ENCODE measurements at regions of chr4 and their contacts with region 1.

Region 1: GRCh38 chr4:7802093-7802726 is 137.5 kb downstream of the AFAP1 start:
- DNase-seq: peak; percentile 80
- H3K4me3 Mint-ChIP-seq: no peak overlapping the region
- H3K27ac Mint-ChIP-seq: no peak overlapping the region
- H3K4me1 Mint-ChIP-seq: peaks cover 17% of the 10 kb centered on the region
- H3K27me3 Mint-ChIP-seq: no peaks in the 10 kb centered on the region
- CTCF ChIP-seq: peak; percentile 87

Region 2: DNA sequence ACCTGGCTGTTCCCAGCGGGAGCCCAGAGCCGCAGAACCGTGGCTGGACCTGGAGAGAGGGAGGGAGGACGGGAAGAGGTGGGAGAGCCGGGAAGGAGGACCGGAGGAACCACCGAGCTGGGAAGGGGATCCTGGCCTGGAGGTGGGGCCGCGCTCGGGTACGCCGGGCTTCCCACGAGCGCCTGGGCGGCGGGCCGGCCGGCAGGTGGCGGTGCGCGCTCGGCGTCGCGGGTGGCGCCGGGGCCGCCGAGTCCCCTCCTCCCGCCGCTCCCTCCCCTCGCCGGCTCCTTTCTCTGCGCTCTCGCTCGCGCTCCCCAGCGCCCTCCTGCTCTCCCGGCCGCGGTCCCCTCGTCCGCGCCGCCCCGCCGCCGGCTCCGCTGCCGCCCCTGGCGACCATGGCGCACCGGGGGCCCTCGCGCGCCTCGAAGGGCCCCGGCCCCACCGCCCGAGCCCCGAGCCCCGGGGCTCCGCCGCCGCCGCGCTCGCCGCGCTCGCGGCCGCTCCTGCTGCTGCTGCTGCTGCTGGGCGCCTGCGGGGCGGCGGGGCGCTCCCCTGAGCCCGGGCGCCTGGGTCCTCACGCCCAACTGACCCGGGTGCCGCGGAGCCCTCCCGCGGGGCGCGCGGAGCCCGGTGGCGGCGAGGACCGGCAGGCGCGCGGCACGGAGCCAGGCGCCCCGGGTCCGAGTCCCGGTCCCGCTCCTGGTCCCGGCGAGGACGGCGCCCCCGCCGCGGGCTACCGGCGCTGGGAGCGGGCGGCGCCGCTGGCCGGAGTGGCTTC is 609.8 kb before region 1 on chr4 and contains the start of gene SORCS2:
- CTCF ChIA-PET with region 1: interaction called, 8 read pairs
- POLR2A ChIA-PET with region 1: no interaction called
- intact Hi-C with region 1: loop called (anchors 2 kb)
- DNase-seq: peak; percentile 45
- H3K4me3 Mint-ChIP-seq: no peak within 1 kb of the TSS
- H3K27ac Mint-ChIP-seq: no peak within 1 kb of the TSS
- H3K4me1 Mint-ChIP-seq: peaks cover 13% of the 10 kb centered on the region
- H3K27me3 Mint-ChIP-seq: peaks cover 48% of the 10 kb centered on the region
- CTCF ChIP-seq: peak; percentile 72
- total RNA-seq, gene SORCS2: 0.05 TPM in 1 of 2 replicates, not detected in the other

Region 3: DNA sequence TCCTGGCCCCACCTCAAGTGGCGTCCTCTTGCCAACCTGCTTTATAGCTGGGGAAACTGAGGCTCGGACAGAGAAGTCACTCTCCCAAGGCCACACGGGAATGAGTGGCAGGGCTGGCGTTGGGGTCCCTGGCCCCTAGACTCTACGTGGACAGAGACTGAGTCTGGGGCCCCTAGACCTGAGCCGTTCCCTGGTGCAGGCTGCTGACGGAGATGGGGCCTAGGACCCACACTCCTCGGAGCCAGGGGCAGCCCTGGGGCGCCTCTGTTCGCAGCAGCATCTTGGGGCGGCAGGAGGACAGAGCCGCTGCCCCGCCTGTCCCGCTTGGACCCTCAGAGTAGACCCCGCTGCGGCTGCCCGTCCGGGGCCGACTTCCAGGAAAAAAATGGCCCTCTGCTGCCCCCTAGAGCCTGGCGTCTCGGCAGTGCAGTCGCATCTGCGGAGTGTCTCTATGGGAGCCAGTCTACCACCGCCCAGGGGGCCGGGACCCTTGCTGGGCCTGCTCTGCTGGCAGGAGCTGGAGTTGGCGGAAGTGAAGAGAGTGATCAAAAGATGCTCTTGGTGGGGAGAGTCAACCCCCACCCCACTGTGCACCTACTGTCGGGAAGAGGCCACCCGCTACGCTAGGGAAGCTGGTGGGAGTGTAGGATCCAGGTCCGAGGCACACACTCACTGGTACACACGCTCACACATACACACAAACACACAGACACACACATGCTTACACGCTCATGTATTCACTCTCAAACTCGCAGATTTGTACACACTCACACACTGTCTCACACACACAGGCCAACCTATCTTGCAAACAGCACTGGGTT is 82.6 kb before region 1 on chr4:
- CTCF ChIA-PET with region 1: interaction called, 3 read pairs
- POLR2A ChIA-PET with region 1: no interaction called
- intact Hi-C with region 1: loop called (anchors 2 kb)
- DNase-seq: peak; percentile 38
- H3K4me3 Mint-ChIP-seq: no peak overlapping the region
- H3K27ac Mint-ChIP-seq: no peak overlapping the region
- H3K4me1 Mint-ChIP-seq: no peaks in the 10 kb centered on the region
- H3K27me3 Mint-ChIP-seq: peaks cover 24% of the 10 kb centered on the region
- CTCF ChIP-seq: peak; percentile 75

Region 4: GRCh38 chr4:7929118-7929951 is 127.1 kb after region 1 on chr4:
- CTCF ChIA-PET with region 1: interaction called, 66 read pairs
- POLR2A ChIA-PET with region 1: interaction called, 10 read pairs
- intact Hi-C with region 1: loop called (anchors 1 kb)
- DNase-seq: peak; percentile 84
- H3K4me3 Mint-ChIP-seq: no peak overlapping the region
- H3K27ac Mint-ChIP-seq: peak overlapping the region; percentile 39
- H3K4me1 Mint-ChIP-seq: peaks cover 29% of the 10 kb centered on the region
- H3K27me3 Mint-ChIP-seq: no peaks in the 10 kb centered on the region
- CTCF ChIP-seq: peak; percentile 43

Region 5: DNA sequence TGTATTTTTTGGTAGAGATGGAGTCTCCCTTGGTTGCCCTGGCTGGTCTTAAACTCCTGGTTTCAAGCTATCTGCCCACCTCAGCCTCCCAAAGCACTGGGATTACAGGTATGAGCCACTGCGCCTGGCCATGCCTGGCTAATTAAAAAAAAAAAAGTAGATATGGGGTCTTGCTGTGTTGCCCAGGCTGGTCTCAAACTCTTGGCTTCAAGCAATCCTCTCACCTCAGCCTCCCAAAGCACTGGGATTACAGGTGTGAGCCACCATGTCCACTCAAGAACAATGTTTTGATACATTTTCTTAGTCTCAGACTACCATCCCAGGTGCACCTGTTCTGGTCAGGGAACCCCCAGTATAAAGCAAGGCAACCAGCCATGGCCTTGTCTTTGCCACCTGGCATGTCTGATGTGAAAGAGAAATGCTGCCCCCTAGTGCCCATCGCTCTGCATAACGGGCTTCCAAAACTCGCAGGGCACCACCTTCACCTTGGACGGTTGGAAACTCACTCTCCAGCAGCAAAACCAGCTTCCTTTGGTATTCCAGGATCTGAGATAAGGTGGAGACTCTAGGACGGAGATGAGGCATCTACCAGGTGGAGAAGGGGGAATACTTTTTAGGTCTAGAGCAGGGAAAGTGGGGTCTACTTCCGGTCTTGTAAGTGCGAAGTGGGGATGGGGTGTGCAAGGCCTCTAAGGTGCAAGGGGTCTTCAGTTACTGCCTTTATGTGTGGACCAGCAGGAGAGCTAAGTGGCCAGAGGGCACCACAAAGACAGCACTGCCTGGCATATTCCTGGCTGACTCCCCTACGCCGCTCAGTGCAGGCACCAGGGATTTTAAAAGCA is 185.2 kb after region 1 on chr4:
- CTCF ChIA-PET with region 1: interaction called, 183 read pairs
- POLR2A ChIA-PET with region 1: interaction called, 14 read pairs
- intact Hi-C with region 1: loop called (anchors 1 kb)
- DNase-seq: peak; percentile 84
- H3K4me3 Mint-ChIP-seq: no peak overlapping the region
- H3K27ac Mint-ChIP-seq: no peak overlapping the region
- H3K4me1 Mint-ChIP-seq: peaks cover 6% of the 10 kb centered on the region
- H3K27me3 Mint-ChIP-seq: peaks cover 12% of the 10 kb centered on the region
- CTCF ChIP-seq: peak; percentile 90